Activated CD8-positive, alpha-beta T cell treated with anti-CD3 and anti-CD28 coated beads for 36 hours (primary cell): ENCODE measurements at regions of chr3 and their contacts with region 1.

Region 1: GRCh38 chr3:129183569-129184395 is at the start of gene CNBP:
- DNase-seq: peak; percentile 94
- ATAC-seq: peak; percentile 94
- H3K4me3 Mint-ChIP-seq: peak within 1 kb of the TSS; percentile 97
- H3K27ac Mint-ChIP-seq: peak within 1 kb of the TSS; percentile 99
- H3K4me1 Mint-ChIP-seq: peaks cover 29% of the 10 kb centered on the region
- H3K27me3 Mint-ChIP-seq: no peaks in the 10 kb centered on the region
- CTCF ChIP-seq: no peak
- total RNA-seq, gene CNBP: 453 to 454 TPM

Region 2: DNA sequence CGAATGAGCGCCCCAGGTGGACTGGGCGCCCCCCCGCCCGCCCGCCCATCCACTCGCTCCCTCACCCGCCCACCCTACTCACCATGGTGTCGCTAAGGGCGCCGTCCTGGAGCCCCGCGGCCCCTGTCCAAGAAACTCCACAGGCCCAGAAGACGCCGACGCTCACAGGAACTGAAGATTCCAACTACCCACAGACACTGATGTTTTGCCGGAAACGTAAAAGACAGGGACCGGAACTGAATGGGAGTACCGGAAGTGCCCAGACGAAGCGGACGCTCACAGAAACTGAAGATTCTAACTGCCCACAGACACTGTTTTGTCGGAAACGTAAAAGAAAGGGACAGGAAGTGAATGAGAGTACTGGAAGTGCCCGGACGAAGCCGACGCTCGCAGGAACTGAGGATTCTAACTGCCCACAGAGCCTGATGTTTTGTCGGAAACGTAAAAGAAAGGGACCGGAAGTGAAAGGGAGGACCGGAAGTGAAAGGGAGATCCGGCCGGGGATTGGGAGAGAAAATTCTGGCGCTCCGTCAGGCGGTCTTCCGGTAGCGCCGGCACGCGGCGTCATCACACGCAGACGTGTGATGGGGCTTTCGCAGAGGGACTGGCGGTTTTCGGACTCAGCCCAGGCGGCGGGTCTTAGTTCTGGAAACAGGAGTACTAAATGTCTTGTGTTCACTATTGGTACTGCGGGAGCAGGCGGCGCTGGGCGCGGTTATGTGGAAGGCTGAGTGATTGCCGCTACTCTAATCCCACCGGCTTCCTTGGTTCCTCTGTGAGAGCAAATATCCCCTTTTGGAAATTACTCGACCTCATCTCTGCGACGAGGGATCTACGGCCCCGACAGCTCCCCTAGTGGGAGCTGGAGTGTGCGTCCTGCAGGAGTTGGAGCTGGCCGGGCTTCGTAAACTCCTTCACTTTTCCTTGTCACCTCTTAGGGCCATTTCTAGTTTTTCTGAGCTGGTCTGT is 22.6 kb before region 1 on chr3 and contains the start of gene ISY1:
- CTCF ChIA-PET with region 1: interaction called, 28 read pairs
- POLR2A ChIA-PET with region 1: interaction called, 45 read pairs
- intact Hi-C with region 1: no loop called
- DNase-seq: peak; percentile 91
- ATAC-seq: peak; percentile 82
- H3K4me3 Mint-ChIP-seq: peak within 1 kb of the TSS; percentile 88
- H3K27ac Mint-ChIP-seq: peak within 1 kb of the TSS; percentile 98
- H3K4me1 Mint-ChIP-seq: peaks cover 27% of the 10 kb centered on the region
- H3K27me3 Mint-ChIP-seq: no peaks in the 10 kb centered on the region
- CTCF ChIP-seq: peak; percentile 84
- total RNA-seq, gene ISY1: 66.7 to 68.5 TPM

Region 3: DNA sequence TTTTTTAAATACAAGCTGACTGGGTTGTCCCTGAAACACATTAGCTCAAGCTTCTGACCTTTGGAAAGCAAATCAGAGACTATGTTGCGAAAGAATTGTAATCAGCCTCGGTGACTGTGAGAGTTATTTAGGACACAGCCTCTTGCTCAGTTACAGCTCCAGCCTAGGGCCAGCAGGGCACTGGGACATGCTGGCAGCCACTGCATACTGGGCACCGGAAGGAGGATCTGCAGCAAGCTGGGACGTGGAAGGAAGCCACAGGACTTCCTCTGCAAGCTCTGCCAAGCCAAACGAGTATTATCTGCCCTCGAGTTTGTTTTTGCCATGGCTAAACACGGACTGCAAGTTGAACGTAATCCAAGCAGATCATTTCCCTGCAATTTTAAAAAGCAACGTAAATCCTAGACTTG is 41.2 kb after region 1 on chr3:
- CTCF ChIA-PET with region 1: interaction called, 5 read pairs
- POLR2A ChIA-PET with region 1: interaction called, 11 read pairs
- intact Hi-C with region 1: no loop called
- DNase-seq: peak; percentile 36
- ATAC-seq: peak; percentile 79
- H3K4me3 Mint-ChIP-seq: peak overlapping the region; percentile 30
- H3K27ac Mint-ChIP-seq: peak overlapping the region; percentile 80
- H3K4me1 Mint-ChIP-seq: peaks cover 8% of the 10 kb centered on the region
- H3K27me3 Mint-ChIP-seq: no peaks in the 10 kb centered on the region
- CTCF ChIP-seq: no peak

Region 4: GRCh38 chr3:129238945-129239706 is 55.3 kb after region 1 on chr3:
- CTCF ChIA-PET with region 1: interaction called, 22 read pairs
- POLR2A ChIA-PET with region 1: interaction called, 10 read pairs
- intact Hi-C with region 1: no loop called
- DNase-seq: peak; percentile 59
- ATAC-seq: peak; percentile 82
- H3K4me3 Mint-ChIP-seq: no peak overlapping the region
- H3K27ac Mint-ChIP-seq: peak overlapping the region; percentile 86
- H3K4me1 Mint-ChIP-seq: peaks cover 17% of the 10 kb centered on the region
- H3K27me3 Mint-ChIP-seq: no peaks in the 10 kb centered on the region
- CTCF ChIP-seq: no peak

Region 5: DNA sequence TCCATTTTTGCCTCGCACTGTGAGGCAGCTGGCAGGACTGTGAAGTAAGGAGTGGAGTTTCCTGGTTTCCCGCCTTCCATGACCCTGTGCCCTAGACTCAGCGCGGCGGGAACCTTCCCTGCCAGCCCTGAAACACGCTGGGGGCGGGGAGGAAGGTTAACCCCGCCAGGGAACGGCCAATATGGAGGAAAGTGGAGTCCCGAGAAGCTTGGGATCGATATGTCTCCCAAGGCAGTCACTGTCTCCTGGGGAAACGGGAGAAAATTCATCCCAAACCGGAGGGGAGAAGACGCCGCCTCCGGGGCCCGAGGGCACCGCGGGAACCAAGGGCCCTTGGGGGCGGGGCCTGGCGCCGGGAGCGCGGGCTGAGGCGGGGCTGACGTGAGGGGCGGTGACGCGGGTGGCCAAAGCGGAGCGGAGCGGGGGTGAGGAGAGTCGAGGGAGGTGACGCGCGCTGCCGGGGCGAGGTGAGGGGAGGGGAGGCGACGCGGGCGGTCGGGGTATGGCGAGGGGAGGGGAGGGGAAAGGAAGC is 94.7 kb after region 1 on chr3 and contains the start of gene HMCES:
- CTCF ChIA-PET with region 1: no interaction called
- POLR2A ChIA-PET with region 1: interaction called, 12 read pairs
- intact Hi-C with region 1: no loop called
- DNase-seq: peak; percentile 95
- ATAC-seq: peak; percentile 84
- H3K4me3 Mint-ChIP-seq: peak within 1 kb of the TSS; percentile 100
- H3K27ac Mint-ChIP-seq: peak within 1 kb of the TSS; percentile 99
- H3K4me1 Mint-ChIP-seq: peaks cover 50% of the 10 kb centered on the region
- H3K27me3 Mint-ChIP-seq: no peaks in the 10 kb centered on the region
- CTCF ChIP-seq: no peak
- total RNA-seq, gene HMCES: 54.5 to 57.8 TPM

Region 6: GRCh38 chr3:129490242-129491045 is 306.7 kb after region 1 on chr3:
- CTCF ChIA-PET with region 1: no interaction called
- POLR2A ChIA-PET with region 1: no interaction called
- intact Hi-C with region 1: no loop called
- DNase-seq: peak; percentile 59
- ATAC-seq: peak; percentile 99
- H3K4me3 Mint-ChIP-seq: no peak overlapping the region
- H3K27ac Mint-ChIP-seq: no peak overlapping the region
- H3K4me1 Mint-ChIP-seq: no peaks in the 10 kb centered on the region
- H3K27me3 Mint-ChIP-seq: no peaks in the 10 kb centered on the region
- CTCF ChIP-seq: peak; percentile 76